ENCODE measurements at regions of chr6 and their contacts with region 1.

Region 1: GRCh38 chr6:34953061-34954025 is 64.3 kb downstream of the ANKS1A start:
- DNase-seq: no peak
- ATAC-seq: peak in 1 of 2 donors; percentile 38
- H3K4me3 ChIP-seq: no peak overlapping the region
- H3K27ac ChIP-seq: no peak overlapping the region
- H3K4me1 ChIP-seq: peaks cover 3% of the 10 kb centered on the region
- H3K27me3 ChIP-seq: no peaks in the 10 kb centered on the region

Region 2: DNA sequence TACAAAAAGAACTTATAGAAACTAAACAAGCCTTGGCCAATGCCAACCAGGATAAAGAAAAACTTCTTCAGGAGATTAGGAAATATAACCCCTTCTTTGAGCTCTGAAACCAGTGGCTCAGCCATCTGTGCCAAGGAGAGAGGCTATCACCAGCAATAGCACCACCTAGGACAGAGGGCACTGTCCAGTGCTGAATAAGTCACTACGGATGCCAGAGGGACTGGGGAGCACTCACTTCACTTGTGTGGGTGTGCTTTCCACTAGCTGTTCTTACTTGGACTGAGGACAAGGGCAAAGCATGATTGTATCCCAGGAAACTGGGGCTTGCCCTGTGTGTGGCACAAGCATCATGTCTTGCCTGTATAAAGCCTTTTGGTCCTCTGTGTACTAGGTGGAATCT is 81.0 kb before region 1 on chr6:
- intact Hi-C with region 1: no loop called
- DNase-seq: no peak
- ATAC-seq: no peak
- H3K4me3 ChIP-seq: no peak overlapping the region
- H3K27ac ChIP-seq: no peak overlapping the region
- H3K4me1 ChIP-seq: no peaks in the 10 kb centered on the region
- H3K27me3 ChIP-seq: no peaks in the 10 kb centered on the region

Region 3: DNA sequence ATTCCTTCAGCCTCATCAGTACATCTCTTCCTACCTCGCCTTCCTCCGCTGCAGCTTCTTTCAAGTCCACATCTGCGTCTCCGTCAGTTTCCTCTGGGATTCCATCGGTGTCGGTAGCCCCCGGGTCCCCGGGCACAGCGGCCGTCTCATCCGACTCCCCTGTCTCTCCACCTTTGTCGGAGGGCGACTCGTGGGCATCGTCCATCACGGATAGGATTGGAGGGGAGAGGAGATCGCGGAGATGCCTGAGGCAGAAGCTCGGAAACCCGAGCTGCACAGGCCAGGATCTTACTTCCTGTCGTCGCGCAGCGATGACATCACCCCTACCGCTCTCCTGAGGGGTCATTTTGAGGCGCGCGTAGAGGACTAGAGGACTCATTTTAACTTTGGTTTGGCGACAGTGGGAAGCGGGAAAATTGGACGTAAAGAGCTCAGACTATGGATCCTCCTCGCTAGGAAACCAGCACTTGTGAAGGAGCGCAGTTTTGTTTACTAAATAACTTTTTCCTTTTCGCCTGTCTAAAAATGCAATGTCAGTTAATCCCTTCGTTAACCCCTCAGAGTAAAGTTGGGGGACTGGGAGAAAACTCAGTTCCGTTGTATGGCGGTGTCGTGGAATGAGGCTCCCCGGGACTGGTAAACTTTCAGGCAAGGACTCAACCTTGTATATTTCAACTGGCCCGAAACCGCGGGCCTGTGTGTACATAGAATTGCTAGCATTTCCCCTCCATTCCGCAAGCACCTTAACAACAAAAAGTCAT is 65.4 kb before region 1 on chr6 and contains the start of gene TAF11:
- intact Hi-C with region 1: loop called in 1 of 4 experiments (anchors 5 kb)
- DNase-seq: peak; percentile 94 to 98 (median 96)
- ATAC-seq: peak; percentile 95
- H3K4me3 ChIP-seq: peak within 1 kb of the TSS; percentile 73
- H3K27ac ChIP-seq: peak within 1 kb of the TSS; percentile 85
- H3K4me1 ChIP-seq: no peaks in the 10 kb centered on the region
- H3K27me3 ChIP-seq: no peaks in the 10 kb centered on the region
- total RNA-seq, gene TAF11: 18.0 to 23.0 (median 19.3) TPM

Region 4: GRCh38 chr6:34901930-34902329 is 51.4 kb before region 1 on chr6:
- intact Hi-C with region 1: loop called in 2 of 4 experiments (anchors 10 kb)
- DNase-seq: no peak
- ATAC-seq: no peak
- H3K4me3 ChIP-seq: no peak overlapping the region
- H3K27ac ChIP-seq: no peak overlapping the region
- H3K4me1 ChIP-seq: peaks cover 7% of the 10 kb centered on the region
- H3K27me3 ChIP-seq: no peaks in the 10 kb centered on the region